ENCODE measurements at regions of chr5 and their contacts with region 1.

Region 1: GRCh38 chr5:54517174-54518092 is at the start of gene SNX18:
- DNase-seq: peak; percentile 92 to 97 (median 97)
- H3K4me3 ChIP-seq: peak within 1 kb of the TSS; percentile 58 to 88 (median 82)
- H3K27ac ChIP-seq: peak within 1 kb of the TSS in 1 of 2 experiments; percentile 58
- H3K4me1 ChIP-seq: peaks cover 21 to 37% (median 32%) of the 10 kb centered on the region in 4 experiments
- H3K27me3 ChIP-seq: peaks cover 0 to 4% (median 0%) of the 10 kb centered on the region in 5 experiments

Region 2: GRCh38 chr5:54844905-54845566 is 327.6 kb after region 1 on chr5:
- CTCF ChIA-PET with region 1: interaction called, 91 read pairs
- POLR2A ChIA-PET with region 1: interaction called, 4 read pairs
- DNase-seq: peak; percentile 60 to 78 (median 74)
- H3K4me3 ChIP-seq: peak overlapping the region in 2 of 7 experiments; percentile 15 to 69
- H3K27ac ChIP-seq: no peak overlapping the region
- H3K4me1 ChIP-seq: no peaks in the 10 kb centered on the region
- H3K27me3 ChIP-seq: no peaks in the 10 kb centered on the region

Region 3: DNA sequence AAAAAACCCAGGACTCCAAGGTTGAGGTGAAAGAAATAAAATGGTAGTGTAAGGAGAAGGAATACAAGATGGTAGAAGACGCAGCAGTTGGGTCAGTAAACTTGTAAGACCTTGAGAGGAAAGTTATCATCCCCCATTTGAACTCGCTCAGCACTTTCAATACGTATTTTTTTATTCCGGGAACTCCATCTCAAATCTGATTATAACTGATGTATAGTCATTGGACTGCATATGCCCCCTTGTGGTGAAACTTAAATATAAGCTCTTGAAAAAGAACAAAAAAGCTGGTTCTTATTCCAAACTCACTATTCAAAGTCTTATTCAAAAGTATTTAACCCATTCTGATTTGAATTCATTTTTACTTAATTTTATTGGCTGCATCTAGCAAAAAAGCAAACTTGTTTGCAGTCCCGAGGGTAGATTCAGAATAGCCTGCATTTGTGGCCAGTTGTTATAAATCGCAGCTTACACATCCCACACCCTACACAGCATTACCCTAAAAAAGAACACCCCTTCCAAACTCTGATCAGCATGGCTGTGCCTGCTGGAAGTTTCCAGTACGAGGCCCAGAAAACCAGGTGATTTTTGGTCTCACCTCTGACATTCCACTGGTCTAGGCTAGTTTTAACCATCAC is 350.0 kb after region 1 on chr5:
- CTCF ChIA-PET with region 1: interaction called, 47 read pairs
- POLR2A ChIA-PET with region 1: no interaction called
- DNase-seq: peak; percentile 56 to 77 (median 76)
- H3K4me3 ChIP-seq: peak overlapping the region in 3 of 7 experiments; percentile 12 to 59 (median 49)
- H3K27ac ChIP-seq: no peak overlapping the region
- H3K4me1 ChIP-seq: peaks cover 0 to 2% (median 0%) of the 10 kb centered on the region in 4 experiments
- H3K27me3 ChIP-seq: no peaks in the 10 kb centered on the region

Region 4: DNA sequence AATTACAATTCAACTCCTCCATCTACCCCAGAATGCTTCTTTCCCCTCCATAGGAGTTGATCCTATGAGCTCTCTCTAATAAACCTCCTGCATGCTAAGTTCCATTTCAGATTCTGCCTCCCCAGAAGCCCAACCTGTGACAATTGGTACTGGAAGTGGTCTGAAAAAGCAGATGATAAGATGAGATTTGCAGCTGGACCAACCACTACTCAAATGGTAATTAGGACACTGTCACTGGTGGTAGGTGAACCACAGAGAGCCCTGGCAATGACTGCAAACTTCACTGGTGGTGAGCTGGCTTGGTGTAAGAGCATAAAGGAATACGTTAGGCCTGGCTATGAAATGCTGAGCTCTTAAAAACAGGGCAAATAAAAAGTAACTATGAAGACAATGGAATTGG is 355.4 kb after region 1 on chr5:
- CTCF ChIA-PET with region 1: interaction called, 47 read pairs
- POLR2A ChIA-PET with region 1: no interaction called
- DNase-seq: peak in 2 of 3 donors; percentile 15 to 31
- H3K4me3 ChIP-seq: no peak overlapping the region
- H3K27ac ChIP-seq: no peak overlapping the region
- H3K4me1 ChIP-seq: peaks cover 7 to 15% (median 13%) of the 10 kb centered on the region in 4 experiments
- H3K27me3 ChIP-seq: no peaks in the 10 kb centered on the region